ENCODE measurements at regions of chr4 and their contacts with region 1.

Region 1: GRCh38 chr4:185597532-185598188 is 62.4 kb upstream of the PDLIM3 start:
- DNase-seq: peak; percentile 73
- H3K4me3 ChIP-seq: peak overlapping the region in 1 of 2 experiments; percentile 43; a peak in 1 of 4 replicates
- H3K27ac ChIP-seq: no peak overlapping the region
- H3K4me1 ChIP-seq: no peaks in the 10 kb centered on the region
- H3K27me3 ChIP-seq: no peaks in the 10 kb centered on the region
- CTCF ChIP-seq: peak; percentile 99
- EP300 ChIP-seq: no peak
- RAD21 ChIP-seq: peak; percentile 97

Region 2: DNA sequence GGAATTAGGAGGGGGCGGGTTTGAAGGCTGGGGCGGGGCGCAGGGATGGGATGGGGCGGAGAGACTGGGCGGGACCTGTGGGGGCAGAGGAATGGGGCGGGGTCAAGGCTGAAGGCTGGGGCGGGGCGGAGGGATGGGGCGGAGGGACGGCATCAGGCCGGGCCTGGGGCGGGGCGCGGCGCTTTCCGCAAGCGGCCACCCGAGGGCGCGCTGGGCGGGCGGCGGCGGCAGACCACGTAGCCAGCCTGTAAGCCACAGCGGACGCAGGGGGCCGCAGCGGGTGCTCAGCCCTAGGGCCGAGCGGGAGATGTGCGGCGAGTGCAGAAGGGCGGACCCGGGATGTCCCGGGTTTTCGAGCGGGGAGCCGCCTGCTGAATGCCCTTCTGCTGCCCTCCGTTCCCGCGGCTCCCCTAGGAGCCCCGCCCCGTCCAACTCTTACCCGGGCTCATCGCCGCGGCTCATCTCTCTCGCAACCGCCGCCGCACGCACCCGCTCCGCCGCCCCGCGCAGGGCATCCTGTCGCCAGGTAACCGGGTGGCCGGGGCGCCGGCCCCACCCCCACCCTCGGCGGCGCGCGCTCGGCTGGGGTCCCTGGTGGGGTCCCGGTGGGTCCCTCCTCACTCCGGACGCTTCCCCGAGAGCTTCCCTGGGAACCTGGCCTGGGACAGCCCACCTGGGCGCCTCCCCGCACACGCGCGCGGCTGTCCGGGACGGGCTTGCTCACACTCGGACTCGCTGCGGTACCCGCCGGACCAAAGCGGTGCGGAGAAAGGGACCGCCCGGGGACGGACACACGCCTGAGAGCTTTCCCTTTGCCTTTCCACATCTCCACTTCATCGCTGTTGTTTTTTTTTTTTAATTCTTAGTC is 126.2 kb before region 1 on chr4 and contains the start of gene CCDC110:
- CTCF ChIA-PET with region 1: interaction called, 30 read pairs
- POLR2A ChIA-PET with region 1: no interaction called
- DNase-seq: peak; percentile 99
- H3K4me3 ChIP-seq: peak within 1 kb of the TSS; percentile 82 to 83
- H3K27ac ChIP-seq: no peak within 1 kb of the TSS
- H3K4me1 ChIP-seq: peaks cover 0 to 7% of the 10 kb centered on the region in 2 experiments; a peak in 2 of 4 replicates
- H3K27me3 ChIP-seq: no peaks in the 10 kb centered on the region
- CTCF ChIP-seq: peak; percentile 57
- EP300 ChIP-seq: no peak
- RAD21 ChIP-seq: peak; percentile 66
- polyA plus RNA-seq, gene CCDC110: 0.05 TPM in 1 of 2 replicates, not detected in the other

Region 3: DNA sequence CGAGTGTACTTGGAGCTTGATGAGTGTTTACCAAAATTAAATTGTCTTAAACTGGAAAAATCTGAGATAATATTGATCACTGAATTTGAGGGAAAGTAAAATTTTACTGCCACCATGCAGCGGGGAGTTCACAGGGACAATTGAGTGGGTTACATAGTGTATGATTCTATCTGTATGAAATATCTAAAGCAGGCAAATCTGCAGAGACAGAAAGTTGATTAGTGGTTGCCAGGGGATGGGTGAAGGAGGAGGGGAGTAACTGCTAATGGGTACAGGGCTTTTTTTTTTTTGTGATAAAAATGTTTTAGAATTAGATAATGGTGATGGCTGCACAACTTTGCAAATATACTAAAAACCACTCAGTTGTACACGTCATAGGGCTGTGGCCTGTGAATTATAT is 26.9 kb before region 1 on chr4:
- CTCF ChIA-PET with region 1: interaction called, 11 read pairs
- POLR2A ChIA-PET with region 1: no interaction called
- DNase-seq: peak; percentile 40
- H3K4me3 ChIP-seq: no peak overlapping the region
- H3K27ac ChIP-seq: peak overlapping the region in 1 of 2 experiments; percentile 58; a peak in 2 of 4 replicates
- H3K4me1 ChIP-seq: peaks cover 5 to 24% of the 10 kb centered on the region in 2 experiments; a peak in 3 of 4 replicates
- H3K27me3 ChIP-seq: no peaks in the 10 kb centered on the region
- CTCF ChIP-seq: no peak
- EP300 ChIP-seq: peak in 1 of 2 experiments; percentile 47; a peak in 1 of 4 replicates
- RAD21 ChIP-seq: no peak

Region 4: GRCh38 chr4:185587427-185588161 is 10.1 kb before region 1 on chr4:
- CTCF ChIA-PET with region 1: interaction called, 17 read pairs
- POLR2A ChIA-PET with region 1: no interaction called
- DNase-seq: no peak
- H3K4me3 ChIP-seq: no peak overlapping the region
- H3K27ac ChIP-seq: no peak overlapping the region
- H3K4me1 ChIP-seq: no peaks in the 10 kb centered on the region
- H3K27me3 ChIP-seq: no peaks in the 10 kb centered on the region
- CTCF ChIP-seq: no peak
- EP300 ChIP-seq: no peak
- RAD21 ChIP-seq: no peak

Region 5: GRCh38 chr4:186037692-186038658 is 440.3 kb after region 1 on chr4:
- CTCF ChIA-PET with region 1: interaction called, 38 read pairs
- POLR2A ChIA-PET with region 1: no interaction called
- DNase-seq: peak; percentile 61
- H3K4me3 ChIP-seq: no peak overlapping the region
- H3K27ac ChIP-seq: no peak overlapping the region
- H3K4me1 ChIP-seq: peaks cover 0 to 5% of the 10 kb centered on the region in 2 experiments; a peak in 1 of 4 replicates
- H3K27me3 ChIP-seq: no peaks in the 10 kb centered on the region
- CTCF ChIP-seq: peak; percentile 80
- EP300 ChIP-seq: no peak
- RAD21 ChIP-seq: peak; percentile 91